HEK293 (cell line): ENCODE measurements at regions of chr16 and their contacts with region 1.

Region 1: GRCh38 chr16:14529010-14529669 is 100.9 kb downstream of the PARN start:
- H3K4me3 ChIP-seq: no peak overlapping the region
- H3K27ac ChIP-seq: no peak overlapping the region
- H3K4me1 ChIP-seq: no peaks in the 10 kb centered on the region
- CTCF ChIP-seq: peak; percentile 81

Region 2: GRCh38 chr16:14300705-14301168 is 228.4 kb before region 1 on chr16:
- CTCF ChIA-PET with region 1: interaction called, 29 read pairs
- POLR2A ChIA-PET with region 1: no interaction called
- H3K4me3 ChIP-seq: no peak overlapping the region
- H3K27ac ChIP-seq: no peak overlapping the region; the same call in 1 of the 2 replicates
- H3K4me1 ChIP-seq: peaks cover 3% of the 10 kb centered on the region; the same call in 1 of the 2 replicates
- CTCF ChIP-seq: peak; percentile 82

Region 3: GRCh38 chr16:14427371-14427948 is 101.7 kb before region 1 on chr16:
- CTCF ChIA-PET with region 1: no interaction called
- POLR2A ChIA-PET with region 1: no interaction called
- H3K4me3 ChIP-seq: no peak overlapping the region
- H3K27ac ChIP-seq: no peak overlapping the region
- H3K4me1 ChIP-seq: no peaks in the 10 kb centered on the region
- CTCF ChIP-seq: no peak